GM12878 (cell line): ENCODE measurements at regions of chr12 and their contacts with region 1.

Region 1: GRCh38 chr12:15796493-15797141 is 7.4 kb upstream of the EPS8 start:
- DNase-seq: no peak
- ATAC-seq: peak; percentile 43; the same call in 2 of the 3 replicates
- H3K4me3 ChIP-seq: no peak overlapping the region
- H3K27ac ChIP-seq: no peak overlapping the region
- H3K4me1 ChIP-seq: no peaks in the 10 kb centered on the region
- H3K27me3 ChIP-seq: no peaks in the 10 kb centered on the region; a peak in 1 of 4 replicates
- CTCF ChIP-seq: no peak
- EP300 ChIP-seq: no peak
- POLR2A ChIP-seq: no peak
- RAD21 ChIP-seq: no peak

Region 2: DNA sequence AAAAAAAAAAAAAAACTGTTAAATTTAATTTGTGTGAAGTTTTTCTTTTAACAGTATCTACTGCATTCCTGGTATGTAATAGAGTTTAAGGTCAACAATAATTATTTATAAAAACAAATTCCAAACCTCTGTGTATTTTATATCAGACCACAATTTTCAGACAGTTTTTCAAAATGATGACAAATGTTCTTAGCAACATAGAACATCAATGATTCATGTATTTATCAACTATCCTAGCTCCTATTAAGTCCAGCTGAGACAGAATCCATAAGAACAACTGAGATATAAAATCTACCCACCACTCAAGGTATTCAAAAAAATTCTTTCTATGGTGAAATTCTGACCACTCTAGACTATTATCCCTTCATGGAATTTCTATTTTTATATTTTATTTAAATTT is 151.9 kb before region 1 on chr12:
- CTCF ChIA-PET with region 1: no interaction called
- POLR2A ChIA-PET with region 1: no interaction called
- RAD21 ChIA-PET with region 1: no interaction called
- SMC1A ChIA-PET with region 1: no interaction called
- in situ Hi-C with region 1: no loop called
- intact Hi-C with region 1: no loop called
- DNase-seq: no peak
- ATAC-seq: no peak
- H3K4me3 ChIP-seq: no peak overlapping the region
- H3K27ac ChIP-seq: no peak overlapping the region
- H3K4me1 ChIP-seq: no peaks in the 10 kb centered on the region
- H3K27me3 ChIP-seq: no peaks in the 10 kb centered on the region
- CTCF ChIP-seq: no peak
- EP300 ChIP-seq: no peak
- POLR2A ChIP-seq: no peak
- RAD21 ChIP-seq: no peak

Region 3: DNA sequence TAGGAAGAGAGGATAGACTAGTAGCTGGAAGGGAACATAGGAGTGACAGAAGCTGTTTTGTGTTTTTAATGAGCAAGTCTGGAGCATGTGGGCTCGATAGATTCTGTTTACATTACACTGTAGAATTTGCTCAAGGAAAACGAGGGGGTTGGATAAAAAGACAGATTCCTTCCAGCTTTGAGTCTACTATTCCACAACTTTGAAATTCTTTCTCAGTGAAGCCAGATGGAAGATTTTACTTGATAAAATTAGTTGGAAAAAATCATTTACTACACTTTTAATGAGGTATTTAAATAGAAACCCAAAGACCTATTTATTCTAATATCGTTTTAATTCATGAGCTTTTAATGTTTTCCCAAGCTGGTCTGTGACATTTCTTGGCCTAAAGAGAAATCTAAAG is 12.0 kb after region 1 on chr12:
- CTCF ChIA-PET with region 1: interaction called, 6 read pairs
- POLR2A ChIA-PET with region 1: interaction called, 3 read pairs
- RAD21 ChIA-PET with region 1: interaction called, 5 read pairs
- SMC1A ChIA-PET with region 1: interaction called, 13 read pairs
- in situ Hi-C with region 1: no loop called
- intact Hi-C with region 1: no loop called
- DNase-seq: no peak
- ATAC-seq: no peak
- H3K4me3 ChIP-seq: no peak overlapping the region
- H3K27ac ChIP-seq: no peak overlapping the region
- H3K4me1 ChIP-seq: no peaks in the 10 kb centered on the region
- H3K27me3 ChIP-seq: no peaks in the 10 kb centered on the region
- CTCF ChIP-seq: no peak
- EP300 ChIP-seq: no peak
- POLR2A ChIP-seq: no peak
- RAD21 ChIP-seq: no peak